Aorta (tissue), 5 donors: ENCODE measurements at regions of chr1 and their contacts with region 1.

Region 1: GRCh38 chr1:37434292-37434907 is 40.0 kb upstream of the ZC3H12A start:
- DNase-seq: peak; percentile 71 to 90
- ATAC-seq: no peak
- H3K4me3 ChIP-seq: no peak overlapping the region
- H3K27ac ChIP-seq: no peak overlapping the region
- H3K4me1 ChIP-seq: no peaks in the 10 kb centered on the region
- H3K27me3 ChIP-seq: no peaks in the 10 kb centered on the region

Region 2: DNA sequence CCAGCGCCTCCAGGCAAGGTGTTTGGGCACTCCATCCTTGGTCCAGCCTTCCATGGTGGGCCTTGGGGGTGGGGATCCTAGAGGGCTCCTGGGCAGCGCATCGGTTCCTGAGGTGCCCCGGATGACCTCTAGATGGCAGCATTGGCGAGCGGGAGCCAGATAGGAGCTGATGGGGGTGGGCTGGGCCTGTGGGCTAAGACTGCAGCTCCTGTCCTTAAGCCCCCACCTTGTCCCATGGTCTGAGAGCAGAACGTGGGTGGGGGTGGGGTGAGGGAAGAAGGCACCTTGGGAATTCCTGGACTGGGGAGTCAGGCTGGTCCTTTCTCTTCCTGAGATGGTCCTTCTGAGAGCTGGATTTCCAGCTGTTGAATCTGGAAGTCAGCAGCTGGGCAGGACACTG is 858.3 kb before region 1 on chr1:
- intact Hi-C with region 1: loop called (anchors 5 kb)
- DNase-seq: peak; percentile 53 to 83
- ATAC-seq: peak; percentile 71
- H3K4me3 ChIP-seq: no peak overlapping the region
- H3K27ac ChIP-seq: no peak overlapping the region
- H3K4me1 ChIP-seq: no peaks in the 10 kb centered on the region
- H3K27me3 ChIP-seq: no peaks in the 10 kb centered on the region

Region 3: GRCh38 chr1:36703526-36704208 is 730.7 kb before region 1 on chr1:
- intact Hi-C with region 1: loop called in 1 of 2 experiments (anchors 5 kb)
- DNase-seq: peak; percentile 78 to 84
- ATAC-seq: peak; percentile 77
- H3K4me3 ChIP-seq: no peak overlapping the region
- H3K27ac ChIP-seq: no peak overlapping the region
- H3K4me1 ChIP-seq: no peaks in the 10 kb centered on the region
- H3K27me3 ChIP-seq: no peaks in the 10 kb centered on the region

Region 4: DNA sequence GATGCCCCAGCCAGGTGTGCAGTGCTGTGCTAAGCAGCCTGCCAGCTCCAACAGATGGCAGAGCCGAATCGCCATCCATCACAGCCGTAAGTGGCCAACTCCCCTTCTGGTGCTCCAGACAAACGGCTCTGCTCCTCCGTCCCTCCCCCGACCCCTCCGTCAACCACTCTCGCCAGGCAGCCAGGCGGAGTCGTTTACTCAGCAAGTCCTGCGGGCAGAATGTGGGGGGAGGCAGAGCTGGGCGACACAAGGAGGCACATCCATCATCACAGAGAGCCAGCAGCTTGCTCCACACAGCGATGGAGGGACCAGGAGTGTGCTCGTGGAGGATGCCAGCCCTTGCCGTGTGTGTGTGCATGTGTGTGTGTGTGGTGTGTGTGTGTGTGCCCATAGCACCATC is 193.5 kb before region 1 on chr1:
- intact Hi-C with region 1: no loop called
- DNase-seq: no peak
- ATAC-seq: no peak
- H3K4me3 ChIP-seq: no peak overlapping the region
- H3K27ac ChIP-seq: no peak overlapping the region
- H3K4me1 ChIP-seq: no peaks in the 10 kb centered on the region
- H3K27me3 ChIP-seq: no peaks in the 10 kb centered on the region